ENCODE measurements at regions of chr5 and their contacts with region 1.

Region 1: GRCh38 chr5:179313849-179314521 is 31.3 kb downstream of the ADAMTS2 start:
- DNase-seq: peak; percentile 92 to 95
- ATAC-seq: peak; percentile 92
- H3K4me3 ChIP-seq: no peak overlapping the region
- H3K27ac ChIP-seq: no peak overlapping the region
- H3K4me1 ChIP-seq: no peaks in the 10 kb centered on the region
- H3K27me3 ChIP-seq: no peaks in the 10 kb centered on the region

Region 2: GRCh38 chr5:179258922-179259730 is 54.9 kb before region 1 on chr5:
- intact Hi-C with region 1: no loop called
- DNase-seq: peak; percentile 67 to 69
- ATAC-seq: no peak
- H3K4me3 ChIP-seq: no peak overlapping the region
- H3K27ac ChIP-seq: no peak overlapping the region
- H3K4me1 ChIP-seq: no peaks in the 10 kb centered on the region
- H3K27me3 ChIP-seq: no peaks in the 10 kb centered on the region

Region 3: DNA sequence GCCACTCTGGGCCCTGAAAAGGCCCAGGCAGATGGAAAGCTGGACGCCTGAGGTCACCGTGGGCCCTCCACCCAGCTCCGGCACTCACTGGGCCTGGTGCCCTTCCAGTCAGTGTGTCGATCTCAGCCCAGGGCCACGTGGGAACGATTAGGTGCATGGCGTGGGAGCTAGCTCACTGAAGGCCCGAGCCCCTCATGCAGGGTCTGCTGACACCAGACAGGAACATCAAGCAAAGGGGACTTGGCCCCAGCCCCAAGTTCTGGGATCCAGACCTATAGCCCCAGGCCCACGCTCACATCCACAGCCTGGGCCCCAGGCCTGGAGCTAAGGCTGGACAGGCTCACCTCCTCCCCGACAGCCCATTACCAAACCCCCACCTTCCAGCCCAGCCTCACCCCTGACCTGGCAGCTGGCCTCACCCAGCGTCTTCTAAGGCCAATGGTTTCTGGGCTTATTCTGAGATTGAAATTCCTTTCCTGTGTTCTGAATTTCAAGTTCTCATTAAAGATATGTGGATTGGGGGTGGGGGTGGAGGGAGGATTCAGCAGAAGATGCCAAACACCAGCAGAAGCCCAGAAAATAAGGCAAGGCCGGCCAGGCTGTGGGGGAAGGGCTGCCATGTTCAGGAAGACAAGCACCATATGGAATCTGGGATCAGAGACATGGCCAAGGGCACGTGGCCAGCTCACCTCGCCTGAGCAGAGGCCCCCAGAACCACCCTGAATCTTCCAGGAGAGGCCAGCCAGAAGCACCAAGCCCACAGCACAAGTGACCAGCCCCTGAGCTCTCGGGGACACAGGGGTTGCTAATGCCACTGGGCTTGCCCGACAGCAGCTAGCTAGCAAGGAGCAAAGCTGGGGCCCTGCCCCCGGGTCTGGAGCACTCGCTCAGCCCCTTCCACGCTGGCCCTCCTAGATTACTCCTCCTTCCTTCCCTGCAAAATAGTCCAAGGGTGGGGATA is 43.1 kb before region 1 on chr5:
- intact Hi-C with region 1: loop called in 1 of 2 experiments (anchors 2 kb)
- DNase-seq: peak; percentile 69 to 78
- ATAC-seq: peak; percentile 9
- H3K4me3 ChIP-seq: no peak overlapping the region
- H3K27ac ChIP-seq: no peak overlapping the region
- H3K4me1 ChIP-seq: no peaks in the 10 kb centered on the region
- H3K27me3 ChIP-seq: no peaks in the 10 kb centered on the region

Region 4: GRCh38 chr5:179281688-179282087 is 32.3 kb before region 1 on chr5:
- intact Hi-C with region 1: no loop called
- DNase-seq: no peak
- ATAC-seq: no peak
- H3K4me3 ChIP-seq: no peak overlapping the region
- H3K27ac ChIP-seq: no peak overlapping the region
- H3K4me1 ChIP-seq: no peaks in the 10 kb centered on the region
- H3K27me3 ChIP-seq: no peaks in the 10 kb centered on the region

Region 5: GRCh38 chr5:179516221-179516620 is 202.2 kb after region 1 on chr5:
- intact Hi-C with region 1: no loop called
- DNase-seq: peak in 1 of 2 donors; percentile 26
- ATAC-seq: no peak
- H3K4me3 ChIP-seq: no peak overlapping the region
- H3K27ac ChIP-seq: no peak overlapping the region
- H3K4me1 ChIP-seq: no peaks in the 10 kb centered on the region
- H3K27me3 ChIP-seq: no peaks in the 10 kb centered on the region

Region 6: DNA sequence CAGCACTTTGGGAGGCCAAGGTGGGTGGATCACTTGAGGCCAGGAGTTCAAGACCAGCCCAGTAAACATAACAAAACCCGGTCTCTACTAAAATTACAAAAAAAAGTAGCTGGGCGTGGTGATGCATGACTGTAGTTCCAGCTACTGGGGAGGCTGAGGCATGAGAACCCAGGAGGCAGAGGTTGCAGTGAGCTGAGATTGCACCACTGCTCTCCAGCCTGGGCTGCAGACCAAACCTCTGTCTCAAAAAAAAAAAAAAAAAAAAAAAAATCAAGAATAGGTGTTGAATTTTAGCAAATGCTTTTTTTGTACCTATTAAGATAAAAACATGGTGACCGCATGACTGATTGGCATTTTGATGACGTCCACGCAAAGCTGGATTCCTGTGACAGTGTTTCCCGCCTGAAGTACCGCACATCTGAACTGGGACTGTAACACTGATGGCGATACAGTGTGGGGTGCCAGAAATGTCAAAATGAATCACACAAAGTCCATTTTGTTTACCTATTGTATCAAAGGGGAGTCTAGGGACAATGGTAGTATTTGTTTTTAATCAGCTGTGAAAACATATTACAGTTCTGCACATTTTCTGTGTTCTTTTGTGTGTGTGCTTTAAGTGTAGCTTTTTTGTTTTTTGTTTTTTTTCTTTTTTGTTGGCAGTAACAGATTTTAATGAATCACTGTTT is 616.9 kb after region 1 on chr5:
- intact Hi-C with region 1: no loop called
- DNase-seq: no peak
- ATAC-seq: no peak
- H3K4me3 ChIP-seq: no peak overlapping the region
- H3K27ac ChIP-seq: no peak overlapping the region
- H3K4me1 ChIP-seq: no peaks in the 10 kb centered on the region
- H3K27me3 ChIP-seq: no peaks in the 10 kb centered on the region